ENCODE measurements at regions of chr7 and their contacts with region 1.

Region 1: GRCh38 chr7:13117103-13117502 is 429.7 kb downstream of the ARL4A start:
- DNase-seq: peak; percentile 62
- H3K4me3 ChIP-seq: no peak overlapping the region
- H3K27ac ChIP-seq: no peak overlapping the region
- H3K4me1 ChIP-seq: no peaks in the 10 kb centered on the region
- H3K27me3 ChIP-seq: no peaks in the 10 kb centered on the region
- CTCF ChIP-seq: peak; percentile 9 to 36
- POLR2A ChIP-seq: no peak

Region 2: DNA sequence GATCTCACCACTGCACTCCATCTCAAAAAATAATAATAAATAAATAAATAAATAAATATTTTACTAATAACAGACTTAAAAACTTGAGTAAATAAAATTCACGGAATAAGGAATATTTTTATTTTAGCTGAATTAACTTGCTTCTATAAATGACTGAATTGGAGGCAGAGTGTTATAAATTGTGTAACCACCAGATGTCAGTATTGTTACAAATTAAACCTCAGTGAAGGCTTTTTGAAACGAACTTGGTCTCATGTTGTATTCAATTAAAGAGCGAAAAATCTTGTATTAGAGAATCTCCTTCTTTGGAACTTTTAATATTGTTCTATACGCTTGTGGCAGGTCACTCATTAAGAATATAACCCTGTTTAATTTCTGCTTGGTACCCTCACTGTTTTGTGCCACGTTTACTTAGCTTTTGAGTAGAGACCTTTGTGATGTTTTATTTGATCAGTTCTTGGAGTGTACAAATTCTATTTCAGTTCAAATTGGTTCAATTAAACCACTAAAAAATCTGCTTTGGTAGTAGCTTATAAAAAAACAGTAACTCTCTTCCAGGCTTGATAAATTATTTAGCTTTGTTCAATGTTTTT is 592.2 kb before region 1 on chr7:
- CTCF ChIA-PET with region 1: interaction called, 6 read pairs
- POLR2A ChIA-PET with region 1: no interaction called
- dilution Hi-C with region 1: no loop called
- intact Hi-C with region 1: loop called (anchors 5 kb)
- DNase-seq: peak; percentile 75
- H3K4me3 ChIP-seq: no peak overlapping the region
- H3K27ac ChIP-seq: no peak overlapping the region
- H3K4me1 ChIP-seq: no peaks in the 10 kb centered on the region
- H3K27me3 ChIP-seq: peaks cover 2 to 24% of the 10 kb centered on the region in 2 experiments
- CTCF ChIP-seq: peak; percentile 7 to 33
- POLR2A ChIP-seq: no peak

Region 3: DNA sequence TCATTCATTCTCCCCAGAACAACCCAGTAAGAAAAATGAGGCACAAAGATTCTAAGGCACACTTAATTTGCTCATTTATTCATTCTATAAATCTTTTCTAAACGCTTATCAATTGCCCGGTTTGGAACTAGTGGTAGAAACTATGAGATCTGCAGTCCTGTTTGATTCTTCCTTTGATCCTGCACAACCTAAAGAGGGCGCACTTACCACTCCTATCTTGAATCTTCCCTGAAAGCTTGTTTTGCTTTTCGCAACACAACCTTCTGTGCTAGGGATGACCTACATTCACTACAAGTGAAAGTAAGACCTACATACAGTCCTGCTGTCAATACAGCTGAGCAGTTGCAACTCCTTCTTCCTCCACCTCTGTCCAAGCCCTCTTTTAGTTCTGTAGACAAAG is 442.3 kb before region 1 on chr7:
- CTCF ChIA-PET with region 1: interaction called, 219 read pairs
- POLR2A ChIA-PET with region 1: no interaction called
- dilution Hi-C with region 1: no loop called
- intact Hi-C with region 1: no loop called
- DNase-seq: peak; percentile 50
- H3K4me3 ChIP-seq: no peak overlapping the region
- H3K27ac ChIP-seq: no peak overlapping the region
- H3K4me1 ChIP-seq: no peaks in the 10 kb centered on the region
- H3K27me3 ChIP-seq: no peaks in the 10 kb centered on the region
- CTCF ChIP-seq: peak; percentile 39 to 43
- POLR2A ChIP-seq: no peak

Region 4: DNA sequence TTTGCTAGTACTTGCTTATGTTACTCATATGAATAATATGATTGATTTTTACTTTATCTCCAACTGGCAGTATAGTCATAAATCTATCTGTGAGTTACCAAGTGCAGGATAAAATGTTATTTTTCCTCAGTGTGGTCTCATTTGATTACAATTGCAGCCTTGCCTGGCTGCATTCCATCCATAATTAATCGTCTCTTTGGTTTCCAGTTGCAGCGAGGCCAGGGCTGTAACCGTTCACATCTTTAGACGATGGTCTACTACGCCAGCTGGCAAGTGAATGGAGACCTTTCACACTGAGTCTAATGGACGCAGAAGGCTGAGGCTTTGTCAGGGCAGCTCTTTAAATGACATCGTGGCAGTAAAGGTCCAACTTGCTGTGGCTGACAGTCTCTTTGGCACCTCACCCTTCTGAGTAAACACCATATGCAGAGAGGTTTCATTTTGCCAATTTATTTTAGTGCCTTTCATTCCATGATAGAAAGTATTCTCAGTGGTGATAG is 345.7 kb before region 1 on chr7:
- CTCF ChIA-PET with region 1: interaction called, 10 read pairs
- POLR2A ChIA-PET with region 1: no interaction called
- dilution Hi-C with region 1: no loop called
- intact Hi-C with region 1: loop called (anchors 5 kb)
- DNase-seq: peak; percentile 99
- H3K4me3 ChIP-seq: peak overlapping the region in 1 of 3 experiments; percentile 38
- H3K27ac ChIP-seq: peak overlapping the region; percentile 95
- H3K4me1 ChIP-seq: peaks cover 33% of the 10 kb centered on the region
- H3K27me3 ChIP-seq: no peaks in the 10 kb centered on the region
- CTCF ChIP-seq: no peak
- POLR2A ChIP-seq: peak; percentile 81

Region 5: GRCh38 chr7:12961910-12962480 is 155.1 kb before region 1 on chr7:
- CTCF ChIA-PET with region 1: no interaction called
- POLR2A ChIA-PET with region 1: no interaction called
- dilution Hi-C with region 1: no loop called
- intact Hi-C with region 1: no loop called
- DNase-seq: no peak
- H3K4me3 ChIP-seq: no peak overlapping the region
- H3K27ac ChIP-seq: no peak overlapping the region
- H3K4me1 ChIP-seq: no peaks in the 10 kb centered on the region
- H3K27me3 ChIP-seq: no peaks in the 10 kb centered on the region
- CTCF ChIP-seq: no peak
- POLR2A ChIP-seq: no peak

Region 6: GRCh38 chr7:13028825-13029099 is 88.3 kb before region 1 on chr7:
- CTCF ChIA-PET with region 1: interaction called, 8 read pairs
- POLR2A ChIA-PET with region 1: no interaction called
- dilution Hi-C with region 1: no loop called
- intact Hi-C with region 1: loop called (anchors 5 kb)
- DNase-seq: peak; percentile 80
- H3K4me3 ChIP-seq: no peak overlapping the region
- H3K27ac ChIP-seq: peak overlapping the region; percentile 47
- H3K4me1 ChIP-seq: peaks cover 18% of the 10 kb centered on the region
- H3K27me3 ChIP-seq: no peaks in the 10 kb centered on the region
- CTCF ChIP-seq: no peak
- POLR2A ChIP-seq: no peak

Region 7: GRCh38 chr7:13524076-13524475 is 407.0 kb after region 1 on chr7:
- CTCF ChIA-PET with region 1: no interaction called
- POLR2A ChIA-PET with region 1: no interaction called
- dilution Hi-C with region 1: no loop called
- intact Hi-C with region 1: no loop called
- DNase-seq: no peak
- H3K4me3 ChIP-seq: no peak overlapping the region
- H3K27ac ChIP-seq: no peak overlapping the region
- H3K4me1 ChIP-seq: no peaks in the 10 kb centered on the region
- H3K27me3 ChIP-seq: no peaks in the 10 kb centered on the region
- CTCF ChIP-seq: no peak
- POLR2A ChIP-seq: no peak

Measured in endothelial cell of umbilical vein (primary cell).